Left cardiac atrium (tissue), 4 donors: ENCODE measurements at regions of chr14 and their contacts with region 1.

Region 1: GRCh38 chr14:23929822-23930294 is 23.7 kb upstream of the DHRS4 start:
- DNase-seq: peak; percentile 86
- ATAC-seq: peak; percentile 84 to 89

Region 2: GRCh38 chr14:23589606-23590005 is 340.3 kb before region 1 on chr14:
- intact Hi-C with region 1: loop called in 1 of 2 experiments (anchors 5 kb)
- DNase-seq: no peak
- ATAC-seq: peak in 1 of 2 donors; percentile 34

Region 3: DNA sequence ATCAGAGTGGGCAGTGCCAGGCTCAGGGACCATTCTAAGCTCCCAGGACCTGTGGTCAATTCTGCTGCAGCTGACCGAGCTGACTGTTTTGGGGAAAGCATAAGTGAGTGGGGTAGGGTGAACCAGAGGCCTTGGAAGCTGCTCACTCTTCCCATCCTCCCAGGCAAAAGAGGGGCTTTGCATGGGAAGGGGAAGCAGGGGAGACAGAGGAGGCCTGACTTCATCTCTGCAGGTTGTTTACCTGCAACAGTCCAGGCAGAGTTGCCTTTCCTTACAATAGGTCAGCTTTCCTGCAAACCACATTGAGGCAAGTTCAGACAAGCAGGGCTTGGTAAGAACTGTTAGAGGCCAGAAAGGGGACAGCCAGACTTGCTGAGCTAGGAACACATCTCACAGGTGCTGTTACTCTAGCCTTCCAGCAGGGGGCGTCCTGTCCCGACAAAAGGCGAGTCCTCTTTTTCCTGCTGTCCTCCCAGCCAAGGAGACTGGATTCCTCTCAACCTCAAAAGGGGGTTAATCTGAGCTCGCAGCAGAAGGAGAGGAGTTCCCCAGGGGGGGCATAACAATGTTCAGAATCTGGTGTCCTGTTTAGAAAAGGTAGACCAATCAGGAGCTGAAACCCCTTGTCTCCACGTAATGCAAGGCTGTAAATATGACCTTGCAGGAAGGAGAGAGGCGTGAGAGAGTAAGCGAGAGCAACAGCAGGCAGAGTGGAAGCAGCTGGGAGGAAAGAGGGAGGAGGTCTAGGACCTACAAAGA is 298.0 kb before region 1 on chr14:
- intact Hi-C with region 1: loop called (anchors 1 to 5 kb)
- DNase-seq: peak; percentile 70
- ATAC-seq: peak; percentile 88 to 89